ENCODE measurements at regions of chr2 and their contacts with region 1.

Region 1: DNA sequence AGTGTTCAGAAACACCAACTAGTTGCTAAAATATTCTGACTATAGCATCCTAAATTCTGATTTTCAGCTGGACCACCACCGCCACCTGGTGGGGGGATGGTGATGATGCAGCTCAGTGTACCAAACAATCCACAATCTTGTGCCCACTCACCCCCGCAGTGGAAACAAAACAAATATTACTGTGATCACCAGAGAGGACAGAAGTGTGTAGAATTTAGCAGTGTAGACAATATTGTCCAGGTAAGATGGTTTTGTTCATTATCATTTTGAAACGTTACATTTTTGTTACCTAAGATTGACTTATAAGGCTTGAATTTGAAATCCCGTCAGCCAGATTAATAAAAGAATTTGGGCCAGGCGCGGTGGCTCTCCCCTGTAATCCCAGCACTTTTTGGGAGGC is 31.7 kb upstream of the UBXN4 start:
- DNase-seq: peak in 1 of 2 donors; percentile 71
- H3K4me3 ChIP-seq: no peak overlapping the region
- H3K27ac ChIP-seq: no peak overlapping the region
- H3K4me1 ChIP-seq: no peaks in the 10 kb centered on the region
- H3K27me3 ChIP-seq: no peaks in the 10 kb centered on the region
- CTCF ChIP-seq: peak; percentile 73 to 94 (median 91)

Region 2: DNA sequence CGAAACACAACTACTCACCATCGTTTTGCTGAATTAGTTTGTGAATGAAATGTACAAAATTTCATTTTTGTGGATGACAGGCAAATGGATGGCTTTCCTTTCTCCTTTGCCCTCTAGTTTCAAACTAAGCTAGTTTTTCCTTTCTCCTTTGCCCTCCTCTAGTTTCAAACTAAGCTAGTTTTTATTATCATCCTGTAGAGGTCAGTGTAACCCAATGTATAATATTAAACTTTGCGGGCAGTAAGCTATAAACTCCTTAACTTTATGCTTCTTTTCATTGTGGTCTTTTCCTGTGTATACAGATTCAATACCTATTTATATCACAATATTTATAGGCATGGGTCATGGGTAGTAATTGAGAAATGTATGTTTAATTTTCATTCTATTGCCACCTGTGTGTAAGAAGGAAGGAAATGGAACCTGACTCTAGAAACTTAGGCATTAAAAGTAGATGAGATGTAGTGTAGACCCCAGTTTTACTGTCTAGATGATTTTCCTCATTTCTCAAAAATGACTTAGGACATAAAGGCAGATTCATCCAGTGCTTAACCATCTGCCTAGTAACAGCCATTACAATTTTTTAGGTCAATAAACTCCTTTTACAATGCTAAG is 720.9 kb before region 1 on chr2:
- intact Hi-C with region 1: loop called (anchors 5 kb)
- DNase-seq: no peak
- H3K4me3 ChIP-seq: no peak overlapping the region
- H3K27ac ChIP-seq: no peak overlapping the region
- H3K4me1 ChIP-seq: no peaks in the 10 kb centered on the region
- H3K27me3 ChIP-seq: no peaks in the 10 kb centered on the region
- CTCF ChIP-seq: peak in 2 of 3 experiments; percentile 27 to 34

Region 3: GRCh38 chr2:135004005-135004746 is 705.8 kb before region 1 on chr2:
- intact Hi-C with region 1: loop called (anchors 1 kb)
- DNase-seq: peak in 1 of 2 donors; percentile 78
- H3K4me3 ChIP-seq: no peak overlapping the region
- H3K27ac ChIP-seq: no peak overlapping the region
- H3K4me1 ChIP-seq: no peaks in the 10 kb centered on the region
- H3K27me3 ChIP-seq: no peaks in the 10 kb centered on the region
- CTCF ChIP-seq: peak; percentile 76 to 91 (median 89)

Measured in ascending aorta (tissue), 2 donors.